ENCODE measurements at regions of chr10 and their contacts with region 1.

Region 1: DNA sequence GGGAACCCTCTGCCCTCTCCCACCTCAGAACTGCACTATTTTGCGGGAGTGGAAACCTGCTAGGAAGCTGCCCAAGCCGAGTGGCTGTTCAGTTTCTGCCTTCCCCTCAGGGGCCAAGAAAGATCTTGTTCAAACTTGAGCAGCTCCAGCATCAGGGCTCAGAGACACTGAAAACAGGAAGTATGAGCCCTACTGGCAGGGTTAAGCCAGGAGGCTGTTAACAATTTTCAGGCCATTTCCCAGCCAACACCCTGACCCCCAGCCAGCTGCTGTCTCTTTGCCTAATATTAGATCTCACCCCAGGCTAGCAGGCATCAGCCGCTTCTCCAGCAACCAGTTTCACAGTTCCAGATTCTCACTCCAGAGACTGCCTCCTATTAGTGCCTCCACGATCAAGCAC is 9.2 kb downstream of the PLAU start:
- DNase-seq: no peak
- ATAC-seq: no peak
- H3K4me3 ChIP-seq: no peak overlapping the region
- H3K27ac ChIP-seq: 0 out of 2 replicates have a peak overlapping the region, but pooled peaks have one; percentile 4
- H3K4me1 ChIP-seq: peaks cover 3 to 42% of the 10 kb centered on the region in 2 experiments; a peak in 2 of 4 replicates
- H3K27me3 ChIP-seq: no peaks in the 10 kb centered on the region
- CTCF ChIP-seq: no peak
- POLR2A ChIP-seq: no peak
- RAD21 ChIP-seq: no peak

Region 2: GRCh38 chr10:73908853-73909538 is 11.1 kb before region 1 on chr10:
- CTCF ChIA-PET with region 1: no interaction called
- POLR2A ChIA-PET with region 1: interaction called, 11 read pairs
- RAD21 ChIA-PET with region 1: no interaction called
- intact Hi-C with region 1: no loop called
- DNase-seq: no peak
- ATAC-seq: no peak
- H3K4me3 ChIP-seq: peak overlapping the region; percentile 14 to 23
- H3K27ac ChIP-seq: peak overlapping the region; percentile 92
- H3K4me1 ChIP-seq: peaks cover 56 to 73% of the 10 kb centered on the region in 2 experiments
- H3K27me3 ChIP-seq: no peaks in the 10 kb centered on the region
- CTCF ChIP-seq: no peak
- POLR2A ChIP-seq: no peak
- RAD21 ChIP-seq: no peak

Region 3: GRCh38 chr10:73931767-73932619 is 11.9 kb after region 1 on chr10:
- CTCF ChIA-PET with region 1: no interaction called
- POLR2A ChIA-PET with region 1: interaction called, 27 read pairs
- RAD21 ChIA-PET with region 1: no interaction called
- intact Hi-C with region 1: no loop called
- DNase-seq: peak; percentile 91
- ATAC-seq: peak; percentile 94
- H3K4me3 ChIP-seq: peak overlapping the region; percentile 25 to 49
- H3K27ac ChIP-seq: peak overlapping the region; percentile 99
- H3K4me1 ChIP-seq: peaks cover 35 to 60% of the 10 kb centered on the region in 2 experiments
- H3K27me3 ChIP-seq: no peaks in the 10 kb centered on the region
- CTCF ChIP-seq: no peak
- POLR2A ChIP-seq: no peak
- RAD21 ChIP-seq: no peak; the same call in none of the 2 replicates

Measured in HCT116 (cell line).